GM13976 (cell line): ENCODE measurements at regions of chr6 and their contacts with region 1.

Region 1: DNA sequence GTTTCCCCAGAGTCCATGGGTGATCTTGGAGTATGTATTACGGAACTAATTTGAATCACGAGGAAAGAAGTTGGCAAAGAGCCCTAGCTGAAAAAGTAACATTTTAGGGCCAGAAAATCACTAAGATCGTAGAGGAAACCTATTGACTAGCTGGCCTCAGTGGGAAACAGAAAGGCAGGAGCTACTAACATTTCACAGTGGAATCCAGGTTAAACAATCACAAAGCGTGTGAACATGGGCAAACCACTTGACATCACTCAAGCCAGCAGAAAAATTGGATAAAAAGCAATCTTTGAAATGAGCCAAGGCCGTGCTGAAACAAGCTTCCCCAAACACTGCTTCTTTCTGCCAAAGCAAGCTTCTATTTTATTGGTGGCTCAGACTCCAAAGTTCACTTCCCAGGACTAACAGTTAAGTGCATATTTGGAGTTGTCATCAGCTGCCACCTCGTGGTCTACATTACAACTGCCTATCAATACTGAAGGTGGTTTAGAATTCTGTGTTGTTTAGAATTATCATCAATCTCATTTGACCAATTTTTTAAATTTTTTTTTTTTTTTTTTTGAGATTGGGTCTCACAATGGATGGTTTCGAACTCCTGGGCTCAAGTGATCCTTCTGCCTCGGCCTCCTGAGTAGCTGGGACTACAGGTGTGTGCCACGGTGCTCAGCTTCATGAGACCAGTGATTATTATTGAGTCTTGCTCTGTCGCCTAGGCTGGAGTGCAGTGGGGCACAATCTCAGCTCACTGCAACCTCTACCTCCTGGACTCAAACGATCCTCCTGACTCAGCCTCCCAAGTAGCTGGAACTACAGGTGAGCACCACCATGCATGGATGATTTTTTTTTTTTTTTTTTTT is 10.6 kb downstream of the RPS10 start:
- DNase-seq: peak; percentile 58
- CTCF ChIP-seq: no peak

Region 2: GRCh38 chr6:34182751-34183531 is 232.3 kb before region 1 on chr6:
- in situ Hi-C with region 1: loop called (anchors 10 kb)
- DNase-seq: peak; percentile 74
- CTCF ChIP-seq: no peak

Region 3: DNA sequence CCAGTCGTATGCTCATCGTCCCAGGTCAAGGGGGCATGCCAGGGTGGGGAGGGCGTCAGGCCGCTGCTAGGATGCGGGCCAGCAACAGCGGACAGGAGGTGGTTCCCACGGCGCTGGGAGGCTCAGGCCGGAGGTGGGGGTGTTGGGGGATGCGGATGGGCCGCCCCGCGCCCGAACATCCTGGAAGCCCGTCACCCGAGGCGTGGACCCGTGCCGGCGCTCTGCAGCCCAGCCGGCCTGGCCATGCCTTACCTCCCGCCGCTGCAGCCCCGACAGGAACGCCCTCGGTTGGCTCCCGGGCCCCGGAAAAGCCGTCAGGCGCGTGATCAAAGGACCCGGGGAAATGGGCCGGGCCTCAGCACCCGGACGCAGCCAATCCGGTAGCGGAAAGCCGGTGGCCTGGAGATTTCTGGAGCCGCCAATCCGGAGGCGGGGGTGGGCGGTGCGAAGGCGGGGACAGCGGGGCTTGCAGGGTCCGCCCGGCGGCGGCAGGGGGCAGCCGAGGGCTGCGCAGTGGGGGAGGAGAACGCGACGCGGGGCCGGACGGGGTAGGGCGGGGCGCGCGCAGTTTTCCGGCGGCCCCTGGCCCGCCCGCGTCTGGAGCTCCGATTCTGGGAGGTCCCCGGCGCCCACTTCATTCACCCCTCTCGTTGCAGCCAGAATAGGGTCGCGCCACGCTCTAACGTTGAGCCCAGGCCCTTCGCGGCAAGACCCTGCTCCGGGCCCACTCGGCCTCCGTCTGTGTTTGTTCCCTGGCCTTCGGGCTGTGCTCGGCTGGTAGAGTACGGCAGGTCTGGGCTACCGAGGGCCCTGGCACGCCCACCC is 166.3 kb before region 1 on chr6 and contains the start of gene SMIM29:
- in situ Hi-C with region 1: loop called (anchors 10 kb)
- DNase-seq: peak; percentile 97
- CTCF ChIP-seq: peak; percentile 88

Region 4: GRCh38 chr6:34358389-34358905 is 56.8 kb before region 1 on chr6:
- in situ Hi-C with region 1: no loop called
- DNase-seq: no peak
- CTCF ChIP-seq: no peak

Region 5: GRCh38 chr6:34514593-34515472 is 99.6 kb after region 1 on chr6:
- in situ Hi-C with region 1: no loop called
- DNase-seq: no peak
- CTCF ChIP-seq: no peak

Region 6: GRCh38 chr6:35081426-35081851 is 666.2 kb after region 1 on chr6:
- in situ Hi-C with region 1: no loop called
- DNase-seq: no peak
- CTCF ChIP-seq: no peak